ENCODE measurements at regions of chr2 and their contacts with region 1.

Region 1: DNA sequence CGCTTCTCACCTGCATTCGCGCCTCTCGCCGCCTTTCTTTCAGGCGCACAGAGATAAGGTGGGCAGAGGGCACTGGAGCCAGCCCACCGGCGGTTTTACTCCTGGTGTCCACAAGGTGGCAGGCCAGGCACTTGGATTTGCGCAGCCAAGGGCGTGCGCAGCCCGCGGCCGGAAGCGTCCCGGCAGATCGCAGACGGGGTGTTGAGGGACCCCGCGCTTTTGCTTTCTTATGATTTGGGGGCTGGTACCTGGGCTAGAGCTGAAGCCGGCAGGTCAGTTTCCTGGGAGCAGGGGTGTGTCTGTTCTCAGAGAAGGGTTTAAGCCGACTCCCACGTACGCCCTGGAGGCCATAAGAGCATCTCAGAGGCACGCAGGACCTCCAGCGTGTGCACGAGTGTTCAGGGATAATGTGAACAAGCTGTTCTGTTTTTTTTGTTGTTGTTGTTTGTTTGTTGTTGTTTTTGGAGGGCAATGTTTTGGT is 305.6 kb upstream of the CXCR4 start:
- DNase-seq: peak; percentile 94
- H3K4me3 Mint-ChIP-seq: peak overlapping the region; percentile 81
- H3K27ac Mint-ChIP-seq: peak overlapping the region; percentile 7
- H3K4me1 Mint-ChIP-seq: peaks cover 21% of the 10 kb centered on the region
- H3K27me3 Mint-ChIP-seq: peaks cover 53% of the 10 kb centered on the region

Region 2: GRCh38 chr2:136284226-136285119 is 139.1 kb before region 1 on chr2:
- intact Hi-C with region 1: no loop called
- DNase-seq: no peak
- H3K4me3 Mint-ChIP-seq: no peak overlapping the region
- H3K27ac Mint-ChIP-seq: no peak overlapping the region
- H3K4me1 Mint-ChIP-seq: peaks cover 41% of the 10 kb centered on the region
- H3K27me3 Mint-ChIP-seq: no peaks in the 10 kb centered on the region

Region 3: GRCh38 chr2:136738044-136738443 is 314.5 kb after region 1 on chr2:
- intact Hi-C with region 1: loop called (anchors 10 kb)
- DNase-seq: no peak
- H3K4me3 Mint-ChIP-seq: no peak overlapping the region
- H3K27ac Mint-ChIP-seq: no peak overlapping the region
- H3K4me1 Mint-ChIP-seq: no peaks in the 10 kb centered on the region
- H3K27me3 Mint-ChIP-seq: no peaks in the 10 kb centered on the region

Measured in activated CD4-positive, alpha-beta T cell treated with anti-CD3 and anti-CD28 coated beads, Interleukin-2, amount 10 ng/mL, durations not matched to agents 24 days and 14 days (primary cell).